ENCODE measurements at regions of chr3 and their contacts with region 1.

Region 1: GRCh38 chr3:56556908-56557830 is at the start of gene CCDC66:
- DNase-seq: peak; percentile 97
- H3K4me3 Mint-ChIP-seq: peak within 1 kb of the TSS; percentile 94
- H3K27ac Mint-ChIP-seq: peak within 1 kb of the TSS; percentile 97
- H3K4me1 Mint-ChIP-seq: peaks cover 26% of the 10 kb centered on the region
- H3K27me3 Mint-ChIP-seq: no peaks in the 10 kb centered on the region
- total RNA-seq, gene CCDC66: 29.0 to 29.3 TPM

Region 2: GRCh38 chr3:56522374-56522773 is 34.8 kb before region 1 on chr3:
- CTCF ChIA-PET with region 1: no interaction called
- intact Hi-C with region 1: no loop called
- DNase-seq: no peak
- H3K4me3 Mint-ChIP-seq: no peak overlapping the region
- H3K27ac Mint-ChIP-seq: no peak overlapping the region
- H3K4me1 Mint-ChIP-seq: no peaks in the 10 kb centered on the region
- H3K27me3 Mint-ChIP-seq: peaks cover 6% of the 10 kb centered on the region

Region 3: GRCh38 chr3:56593455-56594158 is 36.4 kb after region 1 on chr3:
- CTCF ChIA-PET with region 1: no interaction called
- intact Hi-C with region 1: loop called (anchors 1 kb)
- DNase-seq: peak; percentile 72
- H3K4me3 Mint-ChIP-seq: no peak overlapping the region
- H3K27ac Mint-ChIP-seq: peak overlapping the region; percentile 90
- H3K4me1 Mint-ChIP-seq: peaks cover 61% of the 10 kb centered on the region
- H3K27me3 Mint-ChIP-seq: no peaks in the 10 kb centered on the region

Region 4: GRCh38 chr3:56610669-56611335 is 53.6 kb after region 1 on chr3:
- CTCF ChIA-PET with region 1: no interaction called
- intact Hi-C with region 1: loop called (anchors 5 kb)
- DNase-seq: no peak
- H3K4me3 Mint-ChIP-seq: no peak overlapping the region
- H3K27ac Mint-ChIP-seq: no peak overlapping the region
- H3K4me1 Mint-ChIP-seq: peaks cover 61% of the 10 kb centered on the region
- H3K27me3 Mint-ChIP-seq: no peaks in the 10 kb centered on the region